Activated CD4-positive, alpha-beta memory T cell treated with anti-CD3 and anti-CD28 coated beads for 36 hours (primary cell): ENCODE measurements at regions of chr6 and their contacts with region 1.

Region 1: GRCh38 chr6:135183532-135184440 is 2.7 kb downstream of the MYB start:
- DNase-seq: peak; percentile 91
- H3K4me3 Mint-ChIP-seq: peak overlapping the region; percentile 88
- H3K27ac Mint-ChIP-seq: peak overlapping the region; percentile 92
- H3K4me1 Mint-ChIP-seq: peaks cover 17% of the 10 kb centered on the region
- H3K27me3 Mint-ChIP-seq: no peaks in the 10 kb centered on the region

Region 2: DNA sequence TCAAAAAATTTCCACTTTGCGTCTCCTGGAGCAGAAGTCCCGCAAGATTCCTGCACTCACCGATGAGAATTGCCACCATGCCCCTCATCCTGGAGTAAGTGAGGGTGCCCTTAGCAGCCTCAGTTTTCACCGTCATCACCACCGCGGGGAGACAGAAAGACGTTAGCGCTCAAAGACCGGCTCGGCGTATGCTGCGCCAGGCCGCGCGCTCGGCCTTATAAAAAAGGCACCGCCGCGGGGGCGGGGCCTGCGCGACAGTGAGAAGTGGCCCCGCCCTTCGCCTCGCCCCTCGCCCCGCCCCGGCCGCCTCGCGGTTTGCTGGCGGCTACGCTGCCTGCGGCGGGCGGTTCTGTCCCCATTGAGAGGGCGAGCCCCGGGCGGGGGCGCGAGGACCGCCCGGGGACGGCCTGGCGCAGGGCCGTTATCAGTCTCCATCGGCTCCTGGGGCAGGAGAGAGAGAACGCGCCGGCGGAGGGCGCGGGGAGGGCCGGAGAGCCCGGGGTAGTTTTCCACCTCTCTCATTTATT is 1009.1 kb before region 1 on chr6:
- CTCF ChIA-PET with region 1: no interaction called
- POLR2A ChIA-PET with region 1: no interaction called
- intact Hi-C with region 1: loop called (anchors 10 kb)
- DNase-seq: peak; percentile 94
- H3K4me3 Mint-ChIP-seq: peak overlapping the region; percentile 98
- H3K27ac Mint-ChIP-seq: peak overlapping the region; percentile 94
- H3K4me1 Mint-ChIP-seq: peaks cover 62% of the 10 kb centered on the region
- H3K27me3 Mint-ChIP-seq: no peaks in the 10 kb centered on the region

Region 3: DNA sequence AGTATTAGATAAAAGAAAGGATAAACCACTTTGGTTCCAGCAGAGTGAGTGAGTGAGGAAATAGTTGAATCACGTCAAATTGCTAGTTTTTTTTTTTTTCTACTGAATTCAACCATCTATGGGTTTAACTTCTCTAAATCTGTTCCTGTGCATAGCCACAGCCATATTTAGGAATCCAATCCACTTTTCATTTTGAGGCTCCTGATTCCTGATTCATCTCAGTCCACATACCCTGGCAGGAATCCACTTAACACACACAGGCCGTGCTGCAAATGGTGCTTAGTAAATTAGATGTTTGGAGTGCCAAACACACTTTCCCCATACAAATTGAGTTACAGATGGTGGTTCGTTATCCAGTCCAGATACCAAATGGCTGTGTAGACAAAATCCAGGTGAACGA is 454.2 kb before region 1 on chr6:
- CTCF ChIA-PET with region 1: no interaction called
- POLR2A ChIA-PET with region 1: no interaction called
- intact Hi-C with region 1: no loop called
- DNase-seq: no peak
- H3K4me3 Mint-ChIP-seq: no peak overlapping the region
- H3K27ac Mint-ChIP-seq: no peak overlapping the region
- H3K4me1 Mint-ChIP-seq: no peaks in the 10 kb centered on the region
- H3K27me3 Mint-ChIP-seq: peaks cover 12% of the 10 kb centered on the region

Region 4: DNA sequence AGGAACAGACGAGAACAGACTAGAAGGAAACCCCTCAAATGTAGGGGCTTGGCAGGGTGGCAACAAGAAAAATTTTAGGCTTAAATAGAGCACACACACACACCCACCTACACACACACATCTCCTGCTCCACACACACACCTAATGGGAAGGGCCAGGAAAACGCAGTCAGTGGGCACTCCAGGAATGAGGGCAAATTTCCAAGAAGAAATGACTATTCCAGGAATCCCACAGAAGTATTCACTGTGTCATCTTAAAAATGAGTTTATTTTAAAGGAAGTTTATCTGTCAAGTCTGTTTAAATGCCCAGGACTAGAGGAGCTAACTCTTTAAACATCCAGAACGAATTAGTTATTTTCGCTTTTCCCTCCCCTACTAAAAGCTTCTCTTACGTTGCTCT is 246.9 kb before region 1 on chr6:
- CTCF ChIA-PET with region 1: no interaction called
- POLR2A ChIA-PET with region 1: no interaction called
- intact Hi-C with region 1: no loop called
- DNase-seq: no peak
- H3K4me3 Mint-ChIP-seq: no peak overlapping the region
- H3K27ac Mint-ChIP-seq: no peak overlapping the region
- H3K4me1 Mint-ChIP-seq: peaks cover 20% of the 10 kb centered on the region
- H3K27me3 Mint-ChIP-seq: no peaks in the 10 kb centered on the region

Region 5: GRCh38 chr6:135014353-135014832 is 169.4 kb before region 1 on chr6:
- CTCF ChIA-PET with region 1: interaction called, 3 read pairs
- POLR2A ChIA-PET with region 1: no interaction called
- intact Hi-C with region 1: loop called (anchors 1 kb)
- DNase-seq: peak; percentile 17
- H3K4me3 Mint-ChIP-seq: peak overlapping the region; percentile 32
- H3K27ac Mint-ChIP-seq: peak overlapping the region; percentile 70
- H3K4me1 Mint-ChIP-seq: peaks cover 48% of the 10 kb centered on the region
- H3K27me3 Mint-ChIP-seq: no peaks in the 10 kb centered on the region

Region 6: DNA sequence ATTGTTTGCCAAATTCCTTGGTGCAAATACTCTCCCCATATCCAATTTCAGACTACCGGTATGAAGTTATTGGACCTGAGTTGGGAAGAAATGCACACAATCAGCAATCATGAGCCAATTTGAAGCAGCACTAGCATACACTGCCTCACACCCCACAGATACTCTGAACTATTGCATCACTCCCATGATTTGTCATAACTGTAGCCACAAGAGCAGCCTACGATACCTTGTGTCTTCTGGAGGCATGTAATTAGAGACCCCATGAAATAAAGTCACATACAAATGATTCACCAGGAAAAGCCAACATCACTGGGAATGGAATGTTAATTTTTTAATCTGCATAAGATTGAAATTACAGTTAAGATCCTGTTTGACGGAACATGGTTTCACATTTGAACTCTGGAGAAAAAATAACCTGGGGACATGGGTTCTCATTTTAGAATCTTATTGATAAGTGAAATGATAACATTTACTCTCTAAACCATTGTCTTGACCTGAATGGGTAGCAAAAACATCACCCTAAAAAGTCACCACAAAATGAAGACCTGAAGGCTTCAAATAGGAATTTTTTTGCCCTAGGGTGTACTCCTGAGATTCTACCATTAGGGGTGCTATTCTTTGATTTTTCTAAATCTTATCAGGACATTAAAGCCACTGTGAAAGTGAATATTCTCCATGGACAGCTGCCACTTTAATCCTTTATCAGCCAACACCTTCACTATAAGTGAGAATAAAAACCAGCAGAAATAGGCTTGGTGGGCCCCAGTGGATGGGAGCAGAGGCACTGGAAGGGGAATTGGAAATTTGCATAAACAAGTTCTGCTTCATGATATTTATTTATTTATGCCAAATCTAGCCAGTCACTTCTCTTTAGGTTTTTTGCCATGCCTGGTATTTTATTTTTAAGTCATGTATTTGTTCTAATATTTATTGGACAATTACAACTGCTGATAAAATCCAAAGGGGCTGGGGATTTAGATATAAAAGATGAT is 94.7 kb before region 1 on chr6:
- CTCF ChIA-PET with region 1: interaction called, 12 read pairs
- POLR2A ChIA-PET with region 1: interaction called, 7 read pairs
- intact Hi-C with region 1: loop called (anchors 1 kb)
- DNase-seq: peak; percentile 56
- H3K4me3 Mint-ChIP-seq: peak overlapping the region; percentile 34
- H3K27ac Mint-ChIP-seq: peak overlapping the region; percentile 75
- H3K4me1 Mint-ChIP-seq: peaks cover 83% of the 10 kb centered on the region
- H3K27me3 Mint-ChIP-seq: no peaks in the 10 kb centered on the region

Region 7: DNA sequence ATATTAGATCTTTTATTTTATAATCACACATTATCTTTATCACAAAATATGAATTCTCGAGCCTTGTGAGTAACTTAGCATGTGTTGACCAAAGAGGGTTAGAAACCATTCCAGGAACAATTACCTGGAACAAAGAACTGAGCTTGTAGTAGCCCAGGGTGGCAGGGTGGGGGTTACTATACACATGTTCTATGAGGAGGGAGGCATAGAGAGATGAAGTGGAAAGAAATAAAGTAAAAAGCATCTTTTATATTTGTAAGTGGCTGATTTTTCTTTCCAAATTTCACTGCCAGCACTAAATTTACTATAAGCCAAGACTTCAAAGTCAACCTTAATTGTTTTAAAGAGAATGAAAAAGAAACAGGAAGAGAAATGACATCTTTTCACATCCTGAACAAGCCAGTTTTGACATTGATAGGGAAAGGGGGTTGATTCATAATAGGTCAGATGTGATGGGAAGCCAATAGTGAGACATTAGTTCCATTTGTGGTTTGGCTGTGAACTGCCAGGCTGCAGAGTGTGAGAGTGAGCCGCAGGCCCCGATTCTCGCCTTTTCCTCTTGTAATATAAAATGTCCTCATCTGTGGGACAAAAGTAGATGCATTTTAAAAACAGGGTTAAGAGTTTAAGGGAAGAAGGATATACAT is 55.4 kb before region 1 on chr6:
- CTCF ChIA-PET with region 1: interaction called, 16 read pairs
- POLR2A ChIA-PET with region 1: interaction called, 8 read pairs
- intact Hi-C with region 1: loop called (anchors 1 kb)
- DNase-seq: peak; percentile 82
- H3K4me3 Mint-ChIP-seq: peak overlapping the region; percentile 24
- H3K27ac Mint-ChIP-seq: peak overlapping the region; percentile 81
- H3K4me1 Mint-ChIP-seq: peaks cover 42% of the 10 kb centered on the region
- H3K27me3 Mint-ChIP-seq: no peaks in the 10 kb centered on the region

Region 8: GRCh38 chr6:135170849-135171248 is 12.9 kb before region 1 on chr6:
- CTCF ChIA-PET with region 1: interaction called, 5 read pairs
- POLR2A ChIA-PET with region 1: interaction called, 5 read pairs
- intact Hi-C with region 1: loop called (anchors 1 kb)
- DNase-seq: peak; percentile 63
- H3K4me3 Mint-ChIP-seq: peak overlapping the region; percentile 17
- H3K27ac Mint-ChIP-seq: peak overlapping the region; percentile 87
- H3K4me1 Mint-ChIP-seq: peaks cover 16% of the 10 kb centered on the region
- H3K27me3 Mint-ChIP-seq: no peaks in the 10 kb centered on the region

Region 9: DNA sequence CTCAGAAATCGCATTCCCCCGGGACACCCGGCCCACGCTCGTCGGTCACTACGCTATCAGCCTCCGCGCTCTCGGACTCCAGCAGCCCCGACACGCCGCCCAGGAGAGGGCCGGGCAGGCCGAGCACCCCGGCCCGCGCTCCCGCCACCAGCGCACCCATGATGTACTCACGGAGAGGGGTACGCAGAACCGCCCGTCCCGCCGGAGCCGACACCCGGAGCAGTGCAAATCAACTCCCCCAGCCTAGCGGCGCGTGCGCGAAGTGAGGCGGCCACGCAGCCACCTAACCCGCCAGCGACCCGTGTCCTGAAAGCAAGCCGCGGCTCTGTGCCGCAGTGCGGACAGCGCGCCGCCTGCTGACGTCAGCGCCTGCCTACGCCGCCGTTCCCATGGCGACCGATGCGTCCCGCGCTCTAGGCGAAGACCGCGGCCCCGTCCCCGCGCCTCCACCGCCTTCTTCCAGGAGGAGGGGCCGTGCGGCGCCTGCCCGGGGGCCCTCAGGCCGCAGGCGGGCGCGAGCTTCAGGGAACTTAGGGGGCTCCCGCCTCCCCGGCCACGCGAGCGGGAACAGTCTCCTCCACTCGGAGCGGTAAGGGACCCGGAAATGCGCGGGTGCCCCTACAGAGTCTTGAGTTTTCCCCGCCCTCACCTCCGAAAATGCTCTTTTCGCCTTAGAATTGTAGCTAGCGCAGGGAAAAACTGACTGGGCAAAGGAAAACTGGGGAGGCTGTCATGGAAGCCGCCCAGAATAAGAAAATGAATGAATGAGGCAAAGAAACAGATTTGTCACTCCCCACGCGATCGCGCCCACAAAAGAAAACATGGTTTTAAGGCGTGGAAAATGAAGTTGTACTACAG is 313.9 kb after region 1 on chr6 and contains the start of gene AHI1:
- CTCF ChIA-PET with region 1: no interaction called
- POLR2A ChIA-PET with region 1: no interaction called
- intact Hi-C with region 1: loop called (anchors 5 kb)
- DNase-seq: peak; percentile 90
- H3K4me3 Mint-ChIP-seq: peak within 1 kb of the TSS; percentile 9
- H3K27ac Mint-ChIP-seq: no peak within 1 kb of the TSS
- H3K4me1 Mint-ChIP-seq: peaks cover 10% of the 10 kb centered on the region
- H3K27me3 Mint-ChIP-seq: no peaks in the 10 kb centered on the region
- total RNA-seq, gene AHI1: 18.6 to 22.7 TPM